Activated CD4-positive, alpha-beta T cell treated with anti-CD3 and anti-CD28 coated beads for 36 hours (primary cell): ENCODE measurements at regions of chr3 and their contacts with region 1.

Region 1: GRCh38 chr3:98522244-98523090 is at the start of gene CLDND1:
- DNase-seq: peak; percentile 97
- ATAC-seq: peak; percentile 94
- H3K4me3 Mint-ChIP-seq: peak within 1 kb of the TSS; percentile 95
- H3K27ac Mint-ChIP-seq: peak within 1 kb of the TSS; percentile 95
- H3K4me1 Mint-ChIP-seq: peaks cover 66% of the 10 kb centered on the region
- H3K27me3 Mint-ChIP-seq: no peaks in the 10 kb centered on the region
- total RNA-seq, gene CLDND1: 153 to 171 TPM

Region 2: DNA sequence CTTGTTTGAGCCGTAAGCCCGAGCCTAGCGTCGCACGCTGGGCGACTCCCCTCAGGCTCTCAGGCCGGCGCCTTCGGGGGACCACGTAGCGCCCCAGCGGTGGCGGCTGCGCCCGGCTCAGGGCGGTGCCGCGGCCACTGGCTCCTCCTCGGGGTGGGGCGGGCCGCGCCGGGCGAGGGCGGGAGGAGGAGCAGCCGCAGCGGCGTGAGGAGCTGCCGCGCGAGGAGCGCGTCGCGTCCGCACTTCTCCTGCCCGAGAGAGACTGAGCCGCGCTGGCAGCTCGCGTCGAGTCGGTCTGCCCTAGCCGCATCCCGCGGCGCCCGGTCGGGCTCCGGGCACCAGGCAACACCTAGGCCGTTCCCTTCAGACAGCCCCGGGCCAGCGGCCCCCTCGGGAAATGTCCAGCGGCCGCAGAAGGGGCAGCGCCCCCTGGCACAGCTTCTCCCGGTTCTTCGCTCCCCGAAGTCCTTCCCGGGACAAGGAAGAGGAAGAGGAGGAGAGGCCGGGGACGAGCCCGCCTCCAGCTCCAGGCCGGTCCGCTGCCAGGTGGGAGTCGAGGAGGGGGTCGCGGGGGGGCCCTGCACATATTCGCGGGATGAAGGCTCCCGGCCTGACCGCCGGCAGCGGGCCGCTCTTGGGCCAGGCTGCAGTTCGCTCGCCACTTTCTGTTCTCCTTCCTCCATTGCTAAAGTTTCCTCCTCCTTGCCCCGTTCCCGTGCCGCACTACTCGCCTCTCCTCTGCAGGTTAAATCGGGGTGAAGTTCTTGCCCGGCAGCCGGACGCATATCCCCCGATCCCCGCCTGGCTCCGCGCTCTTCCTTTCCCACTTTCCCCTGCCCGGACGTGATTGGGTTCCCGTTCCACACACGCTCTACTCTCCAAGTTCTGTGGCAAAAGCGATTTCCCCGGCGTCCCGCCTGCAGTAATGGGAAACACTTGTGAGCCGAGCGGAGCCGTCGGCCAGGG is 700.4 kb before region 1 on chr3 and contains the start of gene CRYBG3:
- CTCF ChIA-PET with region 1: no interaction called
- POLR2A ChIA-PET with region 1: no interaction called
- intact Hi-C with region 1: loop called in 1 of 2 experiments (anchors 10 kb)
- DNase-seq: peak; percentile 90
- ATAC-seq: peak; percentile 99
- H3K4me3 Mint-ChIP-seq: peak within 1 kb of the TSS; percentile 82
- H3K27ac Mint-ChIP-seq: peak within 1 kb of the TSS; percentile 66
- H3K4me1 Mint-ChIP-seq: peaks cover 18% of the 10 kb centered on the region
- H3K27me3 Mint-ChIP-seq: peaks cover 26% of the 10 kb centered on the region
- total RNA-seq, gene CRYBG3: 4.2 to 4.9 TPM

Region 3: GRCh38 chr3:98540346-98540745 is 17.9 kb after region 1 on chr3:
- CTCF ChIA-PET with region 1: interaction called, 6 read pairs
- POLR2A ChIA-PET with region 1: interaction called, 12 read pairs
- intact Hi-C with region 1: loop called (anchors 1 kb)
- DNase-seq: no peak
- ATAC-seq: peak; percentile 47
- H3K4me3 Mint-ChIP-seq: no peak overlapping the region
- H3K27ac Mint-ChIP-seq: peak overlapping the region; percentile 5
- H3K4me1 Mint-ChIP-seq: peaks cover 53% of the 10 kb centered on the region
- H3K27me3 Mint-ChIP-seq: no peaks in the 10 kb centered on the region

Region 4: GRCh38 chr3:98563661-98564281 is 41.3 kb after region 1 on chr3:
- CTCF ChIA-PET with region 1: interaction called, 6 read pairs
- POLR2A ChIA-PET with region 1: interaction called, 6 read pairs
- intact Hi-C with region 1: loop called in 1 of 2 experiments (anchors 2 kb)
- DNase-seq: no peak
- ATAC-seq: peak; percentile 24
- H3K4me3 Mint-ChIP-seq: no peak overlapping the region
- H3K27ac Mint-ChIP-seq: peak overlapping the region; percentile 74
- H3K4me1 Mint-ChIP-seq: peaks cover 77% of the 10 kb centered on the region
- H3K27me3 Mint-ChIP-seq: no peaks in the 10 kb centered on the region

Region 5: DNA sequence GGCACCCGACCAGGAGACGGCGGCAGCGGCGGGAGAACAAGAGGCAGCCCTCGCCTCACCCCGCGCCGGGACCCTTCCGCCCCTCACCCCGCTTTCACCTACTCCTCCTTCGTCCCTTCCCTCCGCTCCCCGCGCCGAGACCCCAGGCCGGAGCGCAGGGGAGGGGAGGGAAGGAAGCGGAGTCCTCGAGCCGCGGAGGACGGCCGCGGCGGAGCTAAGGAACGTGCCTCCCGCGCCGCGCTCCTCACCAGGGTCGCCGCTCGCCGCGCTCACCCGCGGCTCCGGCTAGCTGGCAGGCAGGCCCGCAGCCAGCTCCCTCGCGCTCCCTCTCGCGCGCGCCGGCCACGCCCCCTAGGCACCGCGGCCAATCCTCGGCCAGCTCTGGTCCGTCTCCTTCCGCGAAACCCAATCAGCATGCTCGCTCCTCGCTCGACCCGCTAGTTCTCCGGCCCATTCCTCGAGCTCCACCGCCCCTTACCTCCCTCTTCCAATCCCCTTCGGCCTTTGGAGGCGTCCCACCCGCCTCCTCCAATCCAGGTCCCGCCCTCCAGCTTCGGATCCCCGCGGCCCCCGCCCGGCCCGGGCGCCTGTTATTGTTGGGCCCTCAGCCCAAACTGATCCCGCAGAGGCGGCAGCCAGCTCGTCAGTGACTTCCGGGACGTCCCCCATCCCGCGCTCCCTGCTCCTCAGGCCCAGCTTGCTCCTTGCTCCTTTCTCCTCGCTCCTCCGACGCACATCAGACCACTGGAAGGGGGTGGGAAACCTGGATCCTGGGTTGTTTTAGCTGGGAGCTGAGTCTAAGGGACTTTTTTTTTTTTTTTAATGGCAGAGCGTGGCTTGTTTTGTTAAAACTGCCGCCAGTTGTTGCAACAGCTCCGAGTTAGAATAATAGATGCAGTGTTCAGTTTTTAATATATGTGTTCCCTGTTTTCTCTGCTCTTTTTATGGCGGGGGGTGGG is 379.2 kb after region 1 on chr3 and contains the start of gene DCBLD2:
- CTCF ChIA-PET with region 1: no interaction called
- POLR2A ChIA-PET with region 1: no interaction called
- intact Hi-C with region 1: loop called in 1 of 2 experiments (anchors 5 kb)
- DNase-seq: peak; percentile 96
- ATAC-seq: peak; percentile 100
- H3K4me3 Mint-ChIP-seq: peak within 1 kb of the TSS; percentile 80
- H3K27ac Mint-ChIP-seq: peak within 1 kb of the TSS; percentile 69
- H3K4me1 Mint-ChIP-seq: peaks cover 16% of the 10 kb centered on the region
- H3K27me3 Mint-ChIP-seq: peaks cover 5% of the 10 kb centered on the region
- total RNA-seq, gene DCBLD2: 1.9 to 2.5 TPM